ENCODE measurements at regions of chr5 and their contacts with region 1.

Region 1: GRCh38 chr5:33936004-33936380 is 194 bp upstream of the RXFP3 start:
- DNase-seq: peak; percentile 53 to 82 (median 62)
- ATAC-seq: peak in 3 of 4 donors; percentile 85 to 97 (median 94)
- H3K4me3 ChIP-seq: peak overlapping the region; percentile 6 to 55 (median 38)
- H3K27ac ChIP-seq: no peak overlapping the region
- H3K4me1 ChIP-seq: peaks cover 0 to 24% (median 8%) of the 10 kb centered on the region in 12 donors
- H3K27me3 ChIP-seq: peaks cover 19 to 59% (median 39%) of the 10 kb centered on the region in 9 donors
- CTCF ChIP-seq: peak in 9 of 12 donors; percentile 5 to 43 (median 25)
- POLR2A ChIP-seq: no peak

Region 2: GRCh38 chr5:33440482-33441240 is 495.3 kb before region 1 on chr5 and contains the start of gene TARS1:
- intact Hi-C with region 1: loop called (anchors 2 to 10 kb)
- DNase-seq: peak; percentile 98 to 99 (median 99)
- ATAC-seq: peak; percentile 96 to 99 (median 98)
- H3K4me3 ChIP-seq: peak within 1 kb of the TSS; percentile 51 to 93 (median 78)
- H3K27ac ChIP-seq: peak within 1 kb of the TSS; percentile 69 to 98 (median 94)
- H3K4me1 ChIP-seq: peaks cover 0 to 53% (median 30%) of the 10 kb centered on the region in 12 donors
- H3K27me3 ChIP-seq: no peaks in the 10 kb centered on the region
- CTCF ChIP-seq: no peak
- POLR2A ChIP-seq: peak in 1 of 2 donors; percentile 83
- total RNA-seq, gene TARS1: 58.1 to 79.7 (median 71.9) TPM

Region 3: GRCh38 chr5:33470544-33470943 is 465.4 kb before region 1 on chr5:
- intact Hi-C with region 1: loop called in 3 of 10 experiments (anchors 5 to 10 kb)
- DNase-seq: no peak
- ATAC-seq: peak in 2 of 4 donors; percentile 64 to 69
- H3K4me3 ChIP-seq: no peak overlapping the region
- H3K27ac ChIP-seq: no peak overlapping the region
- H3K4me1 ChIP-seq: no peaks in the 10 kb centered on the region
- H3K27me3 ChIP-seq: no peaks in the 10 kb centered on the region
- CTCF ChIP-seq: peak in 9 of 12 donors; percentile 7 to 61 (median 33)
- POLR2A ChIP-seq: no peak

Region 4: DNA sequence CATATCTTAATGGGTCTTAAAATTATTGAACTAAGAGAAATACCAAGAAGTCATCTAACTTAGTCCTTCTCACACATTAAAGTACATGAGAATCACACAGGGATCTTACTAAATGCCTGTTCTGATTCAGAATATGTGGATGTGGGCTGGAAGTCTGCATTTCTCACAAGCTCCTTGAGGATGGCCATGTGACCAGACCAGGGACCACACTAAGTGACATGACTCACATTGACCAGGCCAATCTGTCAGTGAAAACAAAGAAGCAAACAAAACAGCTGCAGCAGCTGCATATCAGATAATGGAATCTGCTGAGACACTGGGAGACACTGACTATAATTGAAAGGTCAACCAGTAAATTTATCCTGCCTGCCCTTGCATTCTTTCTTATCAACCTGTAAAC is 154.7 kb before region 1 on chr5:
- intact Hi-C with region 1: no loop called
- DNase-seq: peak in 1 of 5 donors; percentile 45
- ATAC-seq: peak in 3 of 4 donors; percentile 44 to 89 (median 60)
- H3K4me3 ChIP-seq: no peak overlapping the region
- H3K27ac ChIP-seq: peak overlapping the region in 2 of 12 donors; percentile 2 to 3
- H3K4me1 ChIP-seq: peaks cover 0 to 5% (median 0%) of the 10 kb centered on the region in 12 donors
- H3K27me3 ChIP-seq: no peaks in the 10 kb centered on the region
- CTCF ChIP-seq: no peak
- POLR2A ChIP-seq: no peak

Region 5: GRCh38 chr5:33794550-33795181 is 141.3 kb before region 1 on chr5:
- intact Hi-C with region 1: no loop called
- DNase-seq: no peak
- ATAC-seq: peak in 1 of 4 donors; percentile 72
- H3K4me3 ChIP-seq: peak overlapping the region in 2 of 12 donors; percentile 1 to 12
- H3K27ac ChIP-seq: peak overlapping the region in 2 of 12 donors; percentile 8 to 25
- H3K4me1 ChIP-seq: peaks cover 0 to 14% (median 0%) of the 10 kb centered on the region in 12 donors
- H3K27me3 ChIP-seq: no peaks in the 10 kb centered on the region
- CTCF ChIP-seq: no peak
- POLR2A ChIP-seq: no peak

Region 6: DNA sequence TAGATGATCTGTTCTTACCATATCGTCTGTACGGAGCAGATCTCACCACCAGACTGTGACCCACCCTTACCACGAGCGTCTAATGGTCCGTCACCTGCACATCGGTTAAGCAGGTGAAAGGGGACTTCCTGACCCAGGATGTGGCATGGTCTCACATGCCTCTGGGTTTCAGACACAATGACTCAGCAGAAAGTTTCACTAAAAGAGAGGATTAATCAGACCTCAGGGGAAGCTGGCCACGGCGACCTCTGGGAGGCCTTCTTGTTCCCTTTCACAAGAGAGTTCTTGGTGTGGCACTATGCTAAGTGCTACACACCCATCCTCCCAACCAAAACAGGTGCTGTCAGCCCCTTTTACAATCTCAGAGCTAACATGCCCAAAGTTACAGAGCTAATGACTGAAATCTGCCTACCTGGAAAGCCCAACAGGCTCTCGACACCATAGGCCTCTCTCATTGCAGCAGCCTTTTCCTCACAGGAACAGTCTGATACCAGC is 85.8 kb before region 1 on chr5:
- intact Hi-C with region 1: no loop called
- DNase-seq: no peak
- ATAC-seq: no peak
- H3K4me3 ChIP-seq: no peak overlapping the region
- H3K27ac ChIP-seq: no peak overlapping the region
- H3K4me1 ChIP-seq: peaks cover 0 to 33% (median 7%) of the 10 kb centered on the region in 12 donors
- H3K27me3 ChIP-seq: no peaks in the 10 kb centered on the region
- CTCF ChIP-seq: no peak
- POLR2A ChIP-seq: no peak

Measured in heart left ventricle (tissue), 16 donors.